ENCODE measurements at regions of chr16 and their contacts with region 1.

Region 1: GRCh38 chr16:89217388-89218191 is at the start of gene ZNF778:
- DNase-seq: peak; percentile 82
- H3K4me3 ChIP-seq: peak within 1 kb of the TSS; percentile 74 to 96
- H3K27ac ChIP-seq: peak within 1 kb of the TSS; percentile 93 to 96
- H3K4me1 ChIP-seq: peaks cover 4% of the 10 kb centered on the region
- H3K27me3 ChIP-seq: no peaks in the 10 kb centered on the region
- CTCF ChIP-seq: peak in 2 of 4 experiments; percentile 35 to 48
- POLR2A ChIP-seq: peak; percentile 73
- total RNA-seq, gene ZNF778: 12.9 to 30.2 TPM

Region 2: DNA sequence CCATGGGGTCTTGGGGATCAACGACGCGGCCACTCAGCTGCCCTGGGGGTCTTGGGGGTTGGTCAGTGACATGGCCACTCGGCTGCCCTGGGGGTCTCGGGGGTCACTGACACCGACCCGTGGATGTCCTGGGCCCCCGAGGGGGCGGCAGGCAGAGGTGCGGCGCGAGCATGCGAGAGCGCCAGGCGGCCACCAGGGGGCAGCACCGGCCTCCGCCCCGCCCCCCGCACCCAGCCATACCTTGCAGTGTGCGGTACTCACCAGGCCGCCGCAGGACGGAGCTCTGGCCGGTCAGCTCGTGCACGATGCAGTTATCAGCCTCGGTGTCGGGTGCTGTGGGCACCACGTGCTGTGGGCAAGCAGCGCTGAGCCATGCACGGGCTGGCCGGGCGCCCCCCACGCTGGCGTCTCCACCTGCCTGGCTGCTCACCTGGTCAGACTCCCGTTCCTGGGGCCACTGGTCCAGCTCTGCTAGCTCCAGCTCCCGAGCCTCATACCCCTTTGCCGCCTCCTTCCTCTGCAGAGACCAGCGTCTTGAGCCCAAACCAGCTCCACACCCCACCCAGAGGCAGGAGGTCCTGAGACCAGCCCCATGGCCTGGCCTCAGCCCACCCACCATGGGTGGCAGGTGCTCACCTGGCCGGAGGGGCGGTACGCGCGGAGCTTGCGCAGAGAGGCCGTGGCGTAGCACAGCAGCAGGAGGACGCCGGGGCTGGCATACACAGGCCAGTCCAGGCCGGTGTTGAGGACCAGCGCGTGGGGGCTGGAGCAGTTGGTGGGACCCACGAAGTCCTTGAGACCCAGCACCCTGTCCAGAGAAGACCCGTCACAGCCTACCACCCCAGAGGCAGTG is 480.1 kb before region 1 on chr16:
- intact Hi-C with region 1: loop called (anchors 10 kb)
- DNase-seq: peak; percentile 81
- H3K4me3 ChIP-seq: no peak overlapping the region
- H3K27ac ChIP-seq: no peak overlapping the region
- H3K4me1 ChIP-seq: peaks cover 14% of the 10 kb centered on the region
- H3K27me3 ChIP-seq: no peaks in the 10 kb centered on the region
- CTCF ChIP-seq: peak; percentile 99 to 100 (median 100)
- POLR2A ChIP-seq: no peak

Region 3: DNA sequence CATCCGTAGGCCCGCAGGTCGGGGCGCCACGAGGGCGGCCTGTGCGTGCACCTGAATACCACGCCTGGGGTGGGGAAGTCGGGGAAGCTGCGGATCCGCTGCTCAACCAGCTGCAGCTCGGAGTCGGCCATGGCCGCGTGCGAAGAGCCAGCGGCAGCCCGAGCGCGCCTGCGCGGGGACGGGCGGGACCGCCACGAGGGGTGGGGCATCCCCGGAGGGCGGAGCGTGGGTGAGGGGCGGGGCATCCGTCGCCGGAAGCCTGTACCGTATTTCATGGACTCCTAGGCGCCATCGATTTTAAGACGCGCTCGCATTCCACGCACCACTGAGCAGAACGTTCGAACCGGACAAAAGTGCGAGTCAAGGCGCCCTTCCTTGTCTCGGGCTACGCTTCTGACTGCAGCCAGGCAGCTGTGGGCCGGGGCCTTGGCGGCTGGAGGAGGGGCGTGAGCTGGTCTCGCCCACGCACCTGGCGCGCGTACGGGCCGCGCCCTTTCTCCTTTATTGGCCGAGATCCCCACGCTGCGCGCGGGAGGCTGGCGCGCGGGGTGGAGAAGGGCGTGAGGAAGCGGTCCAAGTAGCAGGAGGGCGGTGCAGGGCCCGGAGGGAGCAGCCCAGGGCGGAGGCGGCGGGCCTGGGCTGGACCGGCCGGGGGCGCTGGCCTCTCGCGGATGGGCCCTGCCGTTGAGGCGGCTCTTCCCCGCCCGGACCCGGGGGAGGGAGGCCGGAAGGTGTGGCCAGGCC is 405.6 kb before region 1 on chr16 and contains the start of gene APRT:
- intact Hi-C with region 1: loop called (anchors 5 kb)
- DNase-seq: peak; percentile 90
- H3K4me3 ChIP-seq: peak within 1 kb of the TSS; percentile 60 to 62
- H3K27ac ChIP-seq: peak within 1 kb of the TSS; percentile 83 to 84
- H3K4me1 ChIP-seq: peaks cover 10% of the 10 kb centered on the region
- H3K27me3 ChIP-seq: no peaks in the 10 kb centered on the region
- CTCF ChIP-seq: peak in 3 of 4 experiments; percentile 23 to 62 (median 54)
- POLR2A ChIP-seq: peak; percentile 63
- total RNA-seq, gene APRT: 165 to 211 TPM

Region 4: GRCh38 chr16:88856828-88857733 is 360.5 kb before region 1 on chr16 and contains the starts of genes GALNS and TRAPPC2L:
- intact Hi-C with region 1: loop called (anchors 5 kb)
- DNase-seq: peak; percentile 98
- H3K4me3 ChIP-seq: peak within 1 kb of the TSS; percentile 82 to 93
- H3K27ac ChIP-seq: peak within 1 kb of the TSS; percentile 78 to 79
- H3K4me1 ChIP-seq: peaks cover 3% of the 10 kb centered on the region
- H3K27me3 ChIP-seq: no peaks in the 10 kb centered on the region
- CTCF ChIP-seq: no peak
- POLR2A ChIP-seq: peak; percentile 80
- total RNA-seq, gene GALNS: 20.4 to 75.1 TPM
- total RNA-seq, gene TRAPPC2L: 23.7 to 38.9 TPM

Region 5: GRCh38 chr16:88941913-88942909 is 275.4 kb before region 1 on chr16:
- intact Hi-C with region 1: loop called (anchors 2 kb)
- DNase-seq: no peak
- H3K4me3 ChIP-seq: peak overlapping the region; percentile 38 to 66
- H3K27ac ChIP-seq: peak overlapping the region in 1 of 2 donors; percentile 38
- H3K4me1 ChIP-seq: no peaks in the 10 kb centered on the region
- H3K27me3 ChIP-seq: no peaks in the 10 kb centered on the region
- CTCF ChIP-seq: peak; percentile 45 to 84 (median 73)
- POLR2A ChIP-seq: no peak

Measured in prostate gland (tissue), 2 donors.